CD4-positive, alpha-beta memory T cell (primary cell): ENCODE measurements at regions of chr4 and their contacts with region 1.

Region 1: GRCh38 chr4:11424000-11424399 is 4.7 kb downstream of the HS3ST1 start:
- DNase-seq: peak in 1 of 5 donors; percentile 7
- H3K4me3 ChIP-seq: no peak overlapping the region
- H3K4me3 Mint-ChIP-seq: no peak overlapping the region
- H3K27ac ChIP-seq: no peak overlapping the region
- H3K27ac Mint-ChIP-seq: no peak overlapping the region
- H3K4me1 ChIP-seq: peaks cover 10% of the 10 kb centered on the region
- H3K4me1 Mint-ChIP-seq: peaks cover 7 to 12% (median 9%) of the 10 kb centered on the region in 4 donors
- H3K27me3 ChIP-seq: peaks cover 9% of the 10 kb centered on the region
- H3K27me3 Mint-ChIP-seq: peaks cover 12 to 14% of the 10 kb centered on the region in 2 donors

Region 2: DNA sequence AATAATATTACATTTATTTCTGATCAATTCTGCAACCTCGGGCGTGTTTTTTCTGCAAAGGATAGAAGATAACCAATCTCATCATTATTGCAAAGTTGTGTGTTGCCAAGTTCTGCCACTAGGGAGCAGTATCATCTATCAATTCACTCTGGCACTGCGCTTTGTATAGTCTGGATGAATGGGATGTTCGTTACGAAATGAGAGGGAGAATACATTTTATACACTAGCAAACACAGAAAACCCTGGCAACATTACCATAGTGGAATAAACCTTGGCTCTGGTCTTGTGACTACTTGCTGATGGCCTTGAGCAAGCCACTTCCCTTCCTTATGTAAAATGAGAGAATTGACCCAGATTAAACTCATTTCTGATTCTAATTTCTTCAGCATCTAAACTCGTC is 869.3 kb before region 1 on chr4:
- CTCF ChIA-PET with region 1: interaction called, 10 read pairs
- POLR2A ChIA-PET with region 1: no interaction called
- intact Hi-C with region 1: loop called (anchors 1 kb)
- DNase-seq: peak in 4 of 5 donors; percentile 20 to 36 (median 28)
- H3K4me3 ChIP-seq: no peak overlapping the region
- H3K4me3 Mint-ChIP-seq: peak overlapping the region in 2 of 8 donors; percentile 2 to 7
- H3K27ac ChIP-seq: no peak overlapping the region
- H3K27ac Mint-ChIP-seq: no peak overlapping the region
- H3K4me1 ChIP-seq: no peaks in the 10 kb centered on the region
- H3K4me1 Mint-ChIP-seq: peaks cover 0 to 5% (median 2%) of the 10 kb centered on the region in 4 donors
- H3K27me3 ChIP-seq: no peaks in the 10 kb centered on the region
- H3K27me3 Mint-ChIP-seq: peaks cover 10 to 11% of the 10 kb centered on the region in 2 donors

Region 3: DNA sequence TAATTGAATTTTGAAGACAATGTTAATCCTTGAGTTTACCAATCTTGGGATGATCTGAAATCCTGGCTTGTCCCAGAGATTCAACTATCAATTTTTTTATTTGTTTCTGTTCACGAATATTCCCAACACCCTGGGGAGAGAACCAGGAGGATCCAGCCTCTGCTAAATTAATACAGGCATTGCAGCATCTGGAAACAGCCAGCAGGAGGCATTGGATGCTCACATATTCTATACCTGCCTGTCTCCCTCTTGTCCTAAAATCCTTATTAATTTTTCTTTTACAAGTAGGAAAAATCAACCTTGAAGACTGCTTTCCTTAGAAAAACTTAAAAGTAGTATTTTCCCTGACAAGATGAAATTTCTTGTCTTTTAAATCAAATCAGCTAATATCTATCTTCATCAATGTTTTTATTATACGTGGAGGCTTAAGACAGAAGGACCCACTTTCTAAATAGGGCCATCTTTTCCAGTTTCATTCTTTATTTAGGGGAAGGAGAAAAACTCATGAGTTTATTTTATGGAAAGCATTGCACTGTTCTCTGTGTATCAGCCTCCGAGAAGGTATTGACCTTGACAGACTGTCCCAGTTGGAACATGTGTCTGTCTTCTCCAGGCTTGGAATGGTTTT is 841.8 kb before region 1 on chr4:
- CTCF ChIA-PET with region 1: interaction called, 11 read pairs
- POLR2A ChIA-PET with region 1: no interaction called
- intact Hi-C with region 1: loop called (anchors 1 kb)
- DNase-seq: peak in 3 of 5 donors; percentile 4 to 11 (median 6)
- H3K4me3 ChIP-seq: no peak overlapping the region
- H3K4me3 Mint-ChIP-seq: no peak overlapping the region
- H3K27ac ChIP-seq: no peak overlapping the region
- H3K27ac Mint-ChIP-seq: no peak overlapping the region
- H3K4me1 ChIP-seq: peaks cover 6% of the 10 kb centered on the region
- H3K4me1 Mint-ChIP-seq: peaks cover 6 to 13% (median 9%) of the 10 kb centered on the region in 4 donors
- H3K27me3 ChIP-seq: no peaks in the 10 kb centered on the region
- H3K27me3 Mint-ChIP-seq: peaks cover 0 to 10% of the 10 kb centered on the region in 2 donors

Region 4: GRCh38 chr4:11286533-11286932 is 137.5 kb before region 1 on chr4:
- CTCF ChIA-PET with region 1: no interaction called
- POLR2A ChIA-PET with region 1: no interaction called
- intact Hi-C with region 1: no loop called
- DNase-seq: no peak
- H3K4me3 ChIP-seq: no peak overlapping the region
- H3K4me3 Mint-ChIP-seq: no peak overlapping the region
- H3K27ac ChIP-seq: no peak overlapping the region
- H3K27ac Mint-ChIP-seq: no peak overlapping the region
- H3K4me1 ChIP-seq: no peaks in the 10 kb centered on the region
- H3K4me1 Mint-ChIP-seq: peaks cover 0 to 1% (median 0%) of the 10 kb centered on the region in 4 donors
- H3K27me3 ChIP-seq: no peaks in the 10 kb centered on the region
- H3K27me3 Mint-ChIP-seq: no peaks in the 10 kb centered on the region

Region 5: DNA sequence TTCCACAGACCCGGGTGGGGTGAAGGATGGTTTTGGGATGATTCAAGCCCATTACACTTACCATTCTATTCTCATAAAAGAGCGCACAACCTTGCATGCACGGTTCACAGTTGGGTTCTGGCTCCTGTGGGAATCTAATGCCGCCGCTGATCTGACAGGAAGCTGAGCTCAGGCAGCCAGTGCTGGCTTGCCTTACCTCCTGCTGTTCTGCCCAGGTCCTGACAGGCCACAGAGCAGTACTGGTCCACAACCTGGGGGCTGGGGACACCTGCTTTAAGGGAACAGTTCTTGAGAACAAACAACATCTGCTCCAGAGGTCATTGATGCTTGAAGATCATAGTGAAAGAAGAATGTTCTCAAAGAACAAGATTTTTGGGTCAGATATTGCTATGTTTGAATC is 12.7 kb after region 1 on chr4:
- CTCF ChIA-PET with region 1: interaction called, 15 read pairs
- POLR2A ChIA-PET with region 1: no interaction called
- intact Hi-C with region 1: no loop called
- DNase-seq: no peak
- H3K4me3 ChIP-seq: no peak overlapping the region
- H3K4me3 Mint-ChIP-seq: no peak overlapping the region
- H3K27ac ChIP-seq: no peak overlapping the region
- H3K27ac Mint-ChIP-seq: no peak overlapping the region
- H3K4me1 ChIP-seq: no peaks in the 10 kb centered on the region
- H3K4me1 Mint-ChIP-seq: no peaks in the 10 kb centered on the region
- H3K27me3 ChIP-seq: no peaks in the 10 kb centered on the region
- H3K27me3 Mint-ChIP-seq: peaks cover 1 to 2% of the 10 kb centered on the region in 2 donors